Caco-2 (cell line): ENCODE measurements at regions of chr19 and their contacts with region 1.

Region 1: DNA sequence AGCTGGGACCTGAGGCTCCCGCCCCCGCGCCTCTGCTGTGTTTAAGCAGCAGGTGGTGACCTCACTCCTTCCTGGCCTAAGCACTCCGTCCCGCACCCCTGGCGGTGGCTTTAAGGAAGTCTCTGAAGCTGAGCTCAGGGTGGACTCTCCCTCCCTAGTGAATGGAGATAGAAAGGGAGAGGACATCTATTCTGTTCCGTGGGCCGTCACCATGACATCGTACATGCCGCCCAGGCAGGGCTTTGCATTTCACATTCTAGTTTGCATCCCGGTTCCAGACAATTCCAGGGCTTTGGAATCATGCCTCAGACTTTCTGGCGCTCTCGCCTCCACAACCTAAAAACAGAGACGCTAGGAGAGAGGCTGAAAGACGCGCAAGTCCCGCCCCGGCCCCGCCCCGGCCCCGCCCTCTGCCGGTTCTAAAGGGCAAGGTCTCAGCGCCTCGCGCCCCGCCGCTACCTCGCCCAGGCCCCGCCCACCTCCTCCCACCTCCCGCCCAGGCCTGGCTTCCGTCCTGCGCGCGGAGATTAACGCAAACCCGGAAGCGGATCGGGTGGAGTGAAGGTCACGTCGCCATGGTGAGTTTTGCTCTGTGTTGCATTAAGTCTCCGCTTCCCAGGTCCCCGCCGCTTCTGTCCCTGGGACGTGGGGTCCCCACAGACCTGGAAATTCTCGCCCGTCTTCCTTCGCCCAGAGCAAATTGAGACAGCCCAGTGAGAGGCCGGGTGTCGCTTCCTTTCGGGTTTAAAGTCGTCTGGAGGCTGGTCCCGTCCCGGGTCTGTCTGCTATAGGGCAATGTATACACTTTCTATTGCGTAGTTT is at the start of gene ZNF808:
- DNase-seq: peak; percentile 93 to 97
- H3K4me3 ChIP-seq: peak within 1 kb of the TSS; percentile 73
- H3K4me3 Mint-ChIP-seq: peak within 1 kb of the TSS; percentile 74
- H3K27ac Mint-ChIP-seq: peak within 1 kb of the TSS; percentile 98
- H3K4me1 ChIP-seq: no peaks in the 10 kb centered on the region
- H3K4me1 Mint-ChIP-seq: peaks cover 11% of the 10 kb centered on the region
- H3K27me3 ChIP-seq: no peaks in the 10 kb centered on the region
- H3K27me3 Mint-ChIP-seq: no peaks in the 10 kb centered on the region
- CTCF ChIP-seq: peak; percentile 76 to 82
- total RNA-seq, gene ZNF808: 19.3 and 19.8 TPM in 2 replicates

Region 2: GRCh38 chr19:52397310-52398080 is 129.8 kb before region 1 on chr19 and contains the start of gene ZNF528:
- CTCF ChIA-PET with region 1: no interaction called
- POLR2A ChIA-PET with region 1: no interaction called
- intact Hi-C with region 1: loop called (anchors 5 kb)
- DNase-seq: peak; percentile 91 to 93
- H3K4me3 ChIP-seq: peak within 1 kb of the TSS; percentile 66
- H3K4me3 Mint-ChIP-seq: peak within 1 kb of the TSS; percentile 71
- H3K27ac Mint-ChIP-seq: peak within 1 kb of the TSS; percentile 88
- H3K4me1 ChIP-seq: no peaks in the 10 kb centered on the region
- H3K4me1 Mint-ChIP-seq: peaks cover 7% of the 10 kb centered on the region
- H3K27me3 ChIP-seq: no peaks in the 10 kb centered on the region
- H3K27me3 Mint-ChIP-seq: peaks cover 3% of the 10 kb centered on the region
- CTCF ChIP-seq: no peak
- total RNA-seq, gene ZNF528: 5.7 and 7.8 TPM in 2 replicates

Region 3: GRCh38 chr19:52570000-52570861 is 42.9 kb after region 1 on chr19 and contains the start of gene ZNF701:
- CTCF ChIA-PET with region 1: no interaction called
- POLR2A ChIA-PET with region 1: no interaction called
- intact Hi-C with region 1: loop called (anchors 1 kb)
- DNase-seq: peak; percentile 96 to 98
- H3K4me3 ChIP-seq: peak within 1 kb of the TSS; percentile 77
- H3K4me3 Mint-ChIP-seq: peak within 1 kb of the TSS; percentile 75
- H3K27ac Mint-ChIP-seq: peak within 1 kb of the TSS; percentile 90
- H3K4me1 ChIP-seq: 0 out of 2 replicates have a peak, but pooled peaks cover 3% of the 10 kb centered on the region
- H3K4me1 Mint-ChIP-seq: peaks cover 10% of the 10 kb centered on the region
- H3K27me3 ChIP-seq: no peaks in the 10 kb centered on the region
- H3K27me3 Mint-ChIP-seq: no peaks in the 10 kb centered on the region
- CTCF ChIP-seq: peak; percentile 12 to 42
- total RNA-seq, gene ZNF701: 17.5 and 19.6 TPM in 2 replicates

Region 4: GRCh38 chr19:52601025-52601973 is 74.0 kb after region 1 on chr19:
- CTCF ChIA-PET with region 1: no interaction called
- POLR2A ChIA-PET with region 1: interaction called, 3 read pairs
- intact Hi-C with region 1: loop called (anchors 1 kb)
- DNase-seq: peak; percentile 96 to 98
- H3K4me3 ChIP-seq: peak overlapping the region; percentile 89
- H3K4me3 Mint-ChIP-seq: peak overlapping the region; percentile 81
- H3K27ac Mint-ChIP-seq: peak overlapping the region; percentile 55
- H3K4me1 ChIP-seq: peaks cover 22% of the 10 kb centered on the region
- H3K4me1 Mint-ChIP-seq: peaks cover 19% of the 10 kb centered on the region
- H3K27me3 ChIP-seq: no peaks in the 10 kb centered on the region
- H3K27me3 Mint-ChIP-seq: no peaks in the 10 kb centered on the region
- CTCF ChIP-seq: peak; percentile 40 to 51